HEK293T (cell line): ENCODE measurements at regions of chr10 and their contacts with region 1.

Region 1: GRCh38 chr10:29482591-29483431 is 152.0 kb downstream of the SVIL start:
- DNase-seq: no peak

Region 2: DNA sequence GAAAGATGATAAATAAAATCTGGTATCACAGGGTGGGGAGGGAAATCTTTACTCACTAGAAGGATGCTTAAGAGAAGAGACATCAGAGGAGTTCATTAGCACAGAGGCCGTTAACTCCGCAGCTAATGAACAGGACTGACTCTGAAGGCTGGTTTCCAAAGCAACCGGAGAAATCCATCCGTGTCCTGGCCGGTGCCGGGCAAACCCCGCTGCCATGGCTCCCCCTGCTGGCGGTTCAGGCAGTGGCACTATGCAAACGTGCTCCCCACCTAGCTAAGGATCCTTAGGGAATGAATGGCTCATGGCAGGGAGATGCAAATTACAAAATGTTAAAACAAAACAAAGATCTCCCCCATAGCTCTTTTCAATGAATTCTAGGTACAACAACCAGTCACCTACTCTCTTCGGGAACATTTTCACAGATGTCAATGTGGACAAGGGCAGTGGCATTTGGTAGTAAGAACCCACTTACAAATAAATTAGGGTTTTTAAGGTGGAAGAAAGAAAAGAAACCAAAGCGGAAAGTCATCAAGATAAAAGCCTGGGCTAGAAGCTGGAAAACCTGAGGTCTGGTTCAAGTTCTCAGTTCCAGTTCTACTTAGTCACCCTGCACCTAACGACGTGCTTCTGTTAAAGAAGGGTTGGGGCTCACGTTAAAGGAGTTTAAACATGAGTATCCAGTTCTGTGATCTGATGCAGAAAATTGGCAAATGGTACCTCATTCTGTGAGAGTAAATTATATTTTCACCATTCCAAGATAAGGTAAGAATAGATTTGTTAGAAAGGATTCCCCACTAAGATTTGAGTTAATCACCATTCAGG is 13.7 kb after region 1 on chr10:
- CTCF ChIA-PET with region 1: interaction called, 12 read pairs
- POLR2A ChIA-PET with region 1: no interaction called
- DNase-seq: peak; percentile 67